Endothelial cell of umbilical vein (primary cell): ENCODE measurements at regions of chr17 and their contacts with region 1.

Region 1: GRCh38 chr17:45317112-45317928 is 500 bp upstream of the MAP3K14 start:
- DNase-seq: peak; percentile 100
- H3K4me3 ChIP-seq: peak overlapping the region in 2 of 3 experiments; percentile 1 to 34
- H3K27ac ChIP-seq: no peak overlapping the region
- H3K4me1 ChIP-seq: peaks cover 59% of the 10 kb centered on the region
- H3K27me3 ChIP-seq: no peaks in the 10 kb centered on the region
- CTCF ChIP-seq: no peak
- POLR2A ChIP-seq: no peak

Region 2: DNA sequence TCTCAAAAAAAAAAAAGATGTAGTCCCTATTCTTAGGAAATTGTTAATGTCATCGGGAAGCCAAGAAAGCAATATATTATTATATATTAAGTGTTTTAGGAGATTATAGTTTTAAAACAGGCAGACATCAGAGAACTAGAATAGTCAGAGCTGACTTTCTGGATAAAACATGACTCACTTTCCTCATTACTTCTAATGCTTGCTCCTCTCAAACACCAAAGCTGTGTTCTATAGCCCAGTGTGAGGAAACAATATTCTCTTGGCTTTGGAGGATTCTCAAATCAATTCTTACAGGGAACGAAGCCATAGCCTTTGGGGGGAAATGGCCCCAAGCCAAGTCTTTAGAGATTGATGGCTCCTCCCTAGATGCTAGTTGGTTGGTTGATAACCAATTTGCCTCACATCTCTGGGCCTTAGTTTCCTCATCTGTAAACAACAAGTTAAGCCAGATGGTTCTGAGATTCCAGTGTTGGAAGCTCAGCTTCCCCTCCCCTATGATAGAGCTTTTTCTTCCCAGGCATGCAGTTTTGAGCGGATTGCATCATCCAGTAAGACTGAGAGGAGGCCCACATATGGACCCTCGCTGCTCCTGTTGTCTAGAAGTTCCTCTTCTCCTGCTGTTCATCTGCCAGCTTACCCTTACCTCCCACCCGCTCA is 243.8 kb before region 1 on chr17:
- CTCF ChIA-PET with region 1: no interaction called
- POLR2A ChIA-PET with region 1: no interaction called
- dilution Hi-C with region 1: no loop called
- intact Hi-C with region 1: no loop called
- DNase-seq: no peak
- H3K4me3 ChIP-seq: no peak overlapping the region
- H3K27ac ChIP-seq: no peak overlapping the region
- H3K4me1 ChIP-seq: peaks cover 10% of the 10 kb centered on the region
- H3K27me3 ChIP-seq: no peaks in the 10 kb centered on the region
- CTCF ChIP-seq: no peak
- POLR2A ChIP-seq: no peak

Region 3: GRCh38 chr17:45284176-45285140 is 32.9 kb before region 1 on chr17:
- CTCF ChIA-PET with region 1: interaction called, 74 read pairs
- POLR2A ChIA-PET with region 1: interaction called, 4 read pairs
- dilution Hi-C with region 1: no loop called
- intact Hi-C with region 1: loop called (anchors 2 kb)
- DNase-seq: no peak
- H3K4me3 ChIP-seq: no peak overlapping the region
- H3K27ac ChIP-seq: no peak overlapping the region
- H3K4me1 ChIP-seq: no peaks in the 10 kb centered on the region
- H3K27me3 ChIP-seq: no peaks in the 10 kb centered on the region
- CTCF ChIP-seq: peak; percentile 35 to 40
- POLR2A ChIP-seq: no peak

Region 4: DNA sequence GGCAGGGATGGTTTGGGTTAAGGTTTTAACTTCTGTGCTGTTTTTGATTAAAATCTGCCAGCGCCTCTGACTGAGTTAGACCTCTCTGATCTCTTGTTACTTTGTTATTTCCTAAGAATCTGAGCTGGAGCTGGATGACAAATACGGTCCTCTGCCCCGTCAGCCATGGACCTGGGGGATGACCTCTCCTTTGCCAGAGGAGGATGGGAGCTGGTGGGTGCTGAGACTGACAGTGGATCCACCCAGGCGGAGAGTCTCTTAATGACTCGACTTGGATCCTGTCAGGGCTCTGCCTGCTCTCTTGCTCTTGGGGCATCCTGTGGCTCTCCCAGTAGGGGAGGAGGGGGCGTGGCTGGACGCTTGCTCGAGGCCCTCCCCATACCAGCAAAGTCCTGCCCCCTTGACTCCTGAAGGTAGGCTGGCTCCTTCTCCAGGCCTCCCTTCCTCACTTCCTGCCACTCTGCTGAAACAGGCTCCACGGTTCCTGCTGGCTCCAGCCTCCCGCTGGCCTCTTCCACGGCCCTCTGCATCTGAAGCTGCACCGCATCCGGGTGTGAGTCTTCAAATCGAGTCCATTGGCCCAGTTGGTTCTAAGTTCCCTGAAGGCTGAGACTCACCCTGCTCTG is 24.3 kb after region 1 on chr17:
- CTCF ChIA-PET with region 1: interaction called, 12 read pairs
- POLR2A ChIA-PET with region 1: interaction called, 6 read pairs
- dilution Hi-C with region 1: no loop called
- intact Hi-C with region 1: loop called (anchors 1 kb)
- DNase-seq: peak; percentile 82
- H3K4me3 ChIP-seq: no peak overlapping the region
- H3K27ac ChIP-seq: peak overlapping the region; percentile 58
- H3K4me1 ChIP-seq: peaks cover 32% of the 10 kb centered on the region
- H3K27me3 ChIP-seq: no peaks in the 10 kb centered on the region
- CTCF ChIP-seq: no peak
- POLR2A ChIP-seq: peak; percentile 86

Region 5: GRCh38 chr17:45371414-45372327 is 54.4 kb after region 1 on chr17:
- CTCF ChIA-PET with region 1: interaction called, 30 read pairs
- POLR2A ChIA-PET with region 1: interaction called, 12 read pairs
- dilution Hi-C with region 1: no loop called
- intact Hi-C with region 1: loop called (anchors 1 kb)
- DNase-seq: peak; percentile 93
- H3K4me3 ChIP-seq: peak overlapping the region in 2 of 3 experiments; percentile 12 to 18
- H3K27ac ChIP-seq: peak overlapping the region; percentile 97
- H3K4me1 ChIP-seq: peaks cover 20% of the 10 kb centered on the region
- H3K27me3 ChIP-seq: no peaks in the 10 kb centered on the region
- CTCF ChIP-seq: peak in 1 of 2 donors; percentile 3
- POLR2A ChIP-seq: peak; percentile 76